Endothelial cell of umbilical vein (primary cell): ENCODE measurements at regions of chr5 and their contacts with region 1.

Region 1: GRCh38 chr5:90866333-90866732 is 307.7 kb downstream of the ADGRV1 start:
- DNase-seq: peak; percentile 71
- H3K4me3 ChIP-seq: no peak overlapping the region
- H3K27ac ChIP-seq: no peak overlapping the region
- H3K4me1 ChIP-seq: no peaks in the 10 kb centered on the region
- H3K27me3 ChIP-seq: no peaks in the 10 kb centered on the region
- CTCF ChIP-seq: peak; percentile 4 to 5
- POLR2A ChIP-seq: no peak

Region 2: DNA sequence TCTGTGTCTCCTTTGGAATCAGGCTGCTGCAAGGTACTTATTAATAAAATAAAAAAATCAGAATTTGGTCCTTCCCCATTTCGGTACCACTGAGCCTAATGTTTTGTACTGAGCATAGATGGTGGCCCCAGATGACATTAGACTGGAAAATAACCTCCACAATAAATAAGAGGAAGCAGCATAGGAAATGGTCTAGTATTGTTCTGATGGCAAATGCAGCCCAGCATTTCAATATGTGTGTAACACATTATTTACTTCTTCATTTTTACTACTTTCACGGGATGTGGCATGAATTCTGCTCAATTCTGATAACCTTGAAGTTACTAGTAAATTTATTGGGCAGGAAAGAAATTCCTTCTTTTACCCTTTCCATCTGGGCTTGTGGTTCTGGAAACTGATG is 12.2 kb before region 1 on chr5:
- CTCF ChIA-PET with region 1: interaction called, 12 read pairs
- POLR2A ChIA-PET with region 1: no interaction called
- dilution Hi-C with region 1: no loop called
- intact Hi-C with region 1: no loop called
- DNase-seq: peak; percentile 74
- H3K4me3 ChIP-seq: no peak overlapping the region
- H3K27ac ChIP-seq: no peak overlapping the region
- H3K4me1 ChIP-seq: peaks cover 6% of the 10 kb centered on the region
- H3K27me3 ChIP-seq: no peaks in the 10 kb centered on the region
- CTCF ChIP-seq: no peak
- POLR2A ChIP-seq: no peak

Region 3: GRCh38 chr5:90878549-90879196 is 12.3 kb after region 1 on chr5:
- CTCF ChIA-PET with region 1: interaction called, 13 read pairs
- POLR2A ChIA-PET with region 1: no interaction called
- dilution Hi-C with region 1: no loop called
- intact Hi-C with region 1: no loop called
- DNase-seq: peak; percentile 90
- H3K4me3 ChIP-seq: no peak overlapping the region
- H3K27ac ChIP-seq: peak overlapping the region; percentile 55
- H3K4me1 ChIP-seq: peaks cover 16% of the 10 kb centered on the region
- H3K27me3 ChIP-seq: no peaks in the 10 kb centered on the region
- CTCF ChIP-seq: no peak
- POLR2A ChIP-seq: no peak

Region 4: GRCh38 chr5:90902651-90903386 is 36.5 kb after region 1 on chr5:
- CTCF ChIA-PET with region 1: no interaction called
- POLR2A ChIA-PET with region 1: no interaction called
- dilution Hi-C with region 1: no loop called
- intact Hi-C with region 1: no loop called
- DNase-seq: peak; percentile 32
- H3K4me3 ChIP-seq: no peak overlapping the region
- H3K27ac ChIP-seq: no peak overlapping the region
- H3K4me1 ChIP-seq: no peaks in the 10 kb centered on the region
- H3K27me3 ChIP-seq: no peaks in the 10 kb centered on the region
- CTCF ChIP-seq: no peak
- POLR2A ChIP-seq: no peak

Region 5: DNA sequence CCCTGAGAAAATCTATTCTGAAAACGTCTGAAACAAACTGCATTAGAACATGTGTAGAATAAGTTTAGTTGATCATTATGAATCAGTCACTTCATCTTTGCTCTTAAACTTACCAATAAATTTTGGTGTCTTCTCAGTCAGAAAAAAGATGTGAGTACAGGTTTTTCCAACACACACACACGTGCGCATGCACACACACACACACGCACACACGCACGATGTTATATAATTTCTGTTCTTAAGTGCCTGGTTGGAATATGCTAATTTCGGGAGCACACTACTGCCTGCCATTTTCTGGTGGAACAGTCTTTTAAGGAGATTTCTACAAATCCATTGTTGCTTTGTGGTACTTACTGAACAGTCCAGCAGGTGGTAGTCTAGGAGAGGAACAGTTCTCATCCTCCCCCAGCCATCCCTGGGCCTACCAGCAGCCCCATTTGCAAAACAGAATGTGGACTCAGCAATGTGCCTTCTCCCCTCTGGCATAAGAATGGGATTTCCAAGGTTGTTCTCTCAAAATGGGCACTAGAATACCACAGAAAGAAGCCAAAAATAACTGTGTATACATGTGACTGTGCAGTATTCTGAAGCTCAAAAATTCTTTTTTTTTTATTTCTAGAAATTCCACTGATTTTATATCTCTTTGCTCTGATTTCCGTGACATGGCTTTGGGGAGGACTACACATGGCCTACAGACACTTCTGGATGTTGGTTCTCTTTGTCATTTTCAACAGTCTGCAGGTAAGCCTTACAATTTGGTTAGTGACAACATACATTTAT is 235.5 kb after region 1 on chr5:
- CTCF ChIA-PET with region 1: interaction called, 13 read pairs
- POLR2A ChIA-PET with region 1: no interaction called
- dilution Hi-C with region 1: no loop called
- intact Hi-C with region 1: loop called (anchors 1 kb)
- DNase-seq: peak; percentile 85
- H3K4me3 ChIP-seq: no peak overlapping the region
- H3K27ac ChIP-seq: no peak overlapping the region
- H3K4me1 ChIP-seq: no peaks in the 10 kb centered on the region
- H3K27me3 ChIP-seq: no peaks in the 10 kb centered on the region
- CTCF ChIP-seq: peak; percentile 67 to 70
- POLR2A ChIP-seq: no peak

Region 6: DNA sequence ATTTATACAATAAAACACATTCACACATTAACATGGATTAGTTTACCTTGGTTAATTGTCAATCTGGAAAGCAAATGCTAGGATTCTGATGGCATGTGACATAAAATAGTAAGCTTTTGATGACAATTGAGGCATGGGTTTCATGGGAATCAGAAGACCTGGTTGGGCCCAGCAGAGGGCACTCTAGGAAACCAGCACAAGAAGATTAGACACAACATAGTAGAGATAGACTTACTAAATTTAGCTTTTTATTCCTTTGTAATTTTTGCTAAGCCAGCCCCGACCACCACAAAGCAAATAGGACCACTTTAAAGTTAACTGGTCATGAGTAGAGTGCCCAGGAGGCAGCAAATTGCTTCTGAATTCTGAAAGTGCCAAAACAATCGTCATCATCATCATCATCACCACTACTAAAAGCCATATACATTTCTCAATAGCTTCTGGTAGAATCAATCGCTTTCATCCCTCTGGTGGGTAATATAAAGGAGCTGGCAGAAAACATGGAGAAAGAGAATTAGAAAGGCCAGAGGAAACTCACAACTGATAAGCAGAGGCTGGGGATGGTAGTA is 353.6 kb after region 1 on chr5:
- CTCF ChIA-PET with region 1: interaction called, 24 read pairs
- POLR2A ChIA-PET with region 1: no interaction called
- dilution Hi-C with region 1: no loop called
- intact Hi-C with region 1: loop called (anchors 2 kb)
- DNase-seq: peak; percentile 63
- H3K4me3 ChIP-seq: no peak overlapping the region
- H3K27ac ChIP-seq: no peak overlapping the region
- H3K4me1 ChIP-seq: no peaks in the 10 kb centered on the region
- H3K27me3 ChIP-seq: no peaks in the 10 kb centered on the region
- CTCF ChIP-seq: peak; percentile 30 to 57
- POLR2A ChIP-seq: no peak

Region 7: DNA sequence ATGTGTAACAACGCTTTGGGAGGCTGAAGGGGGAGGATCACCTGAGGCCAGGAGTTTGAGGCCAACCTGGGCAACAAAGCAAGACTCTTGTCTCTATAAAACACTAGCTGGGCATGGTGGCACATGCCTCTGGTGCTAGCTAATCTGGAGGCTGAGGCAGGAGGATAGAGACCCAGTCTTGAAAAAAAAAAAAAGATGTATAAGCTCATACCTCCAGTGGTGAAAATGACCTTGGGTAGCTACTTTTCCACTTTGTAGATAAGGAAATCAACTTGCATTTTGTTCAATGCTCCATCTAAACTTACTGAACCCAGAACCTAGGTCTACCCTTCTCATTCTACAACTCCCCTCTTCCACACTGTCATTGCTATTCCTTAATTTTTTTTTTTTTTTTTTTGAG is 500.2 kb after region 1 on chr5:
- CTCF ChIA-PET with region 1: interaction called, 11 read pairs
- POLR2A ChIA-PET with region 1: no interaction called
- dilution Hi-C with region 1: no loop called
- intact Hi-C with region 1: no loop called
- DNase-seq: peak; percentile 45
- H3K4me3 ChIP-seq: no peak overlapping the region
- H3K27ac ChIP-seq: no peak overlapping the region
- H3K4me1 ChIP-seq: no peaks in the 10 kb centered on the region
- H3K27me3 ChIP-seq: no peaks in the 10 kb centered on the region
- CTCF ChIP-seq: no peak
- POLR2A ChIP-seq: no peak